ENCODE measurements at regions of chr7 and their contacts with region 1.

Region 1: GRCh38 chr7:156892821-156893706 is at the start of gene LMBR1:
- H3K4me3 Mint-ChIP-seq: peak within 1 kb of the TSS; percentile 90
- H3K27ac Mint-ChIP-seq: peak within 1 kb of the TSS; percentile 96
- H3K4me1 Mint-ChIP-seq: peaks cover 42% of the 10 kb centered on the region
- H3K27me3 Mint-ChIP-seq: no peaks in the 10 kb centered on the region

Region 2: DNA sequence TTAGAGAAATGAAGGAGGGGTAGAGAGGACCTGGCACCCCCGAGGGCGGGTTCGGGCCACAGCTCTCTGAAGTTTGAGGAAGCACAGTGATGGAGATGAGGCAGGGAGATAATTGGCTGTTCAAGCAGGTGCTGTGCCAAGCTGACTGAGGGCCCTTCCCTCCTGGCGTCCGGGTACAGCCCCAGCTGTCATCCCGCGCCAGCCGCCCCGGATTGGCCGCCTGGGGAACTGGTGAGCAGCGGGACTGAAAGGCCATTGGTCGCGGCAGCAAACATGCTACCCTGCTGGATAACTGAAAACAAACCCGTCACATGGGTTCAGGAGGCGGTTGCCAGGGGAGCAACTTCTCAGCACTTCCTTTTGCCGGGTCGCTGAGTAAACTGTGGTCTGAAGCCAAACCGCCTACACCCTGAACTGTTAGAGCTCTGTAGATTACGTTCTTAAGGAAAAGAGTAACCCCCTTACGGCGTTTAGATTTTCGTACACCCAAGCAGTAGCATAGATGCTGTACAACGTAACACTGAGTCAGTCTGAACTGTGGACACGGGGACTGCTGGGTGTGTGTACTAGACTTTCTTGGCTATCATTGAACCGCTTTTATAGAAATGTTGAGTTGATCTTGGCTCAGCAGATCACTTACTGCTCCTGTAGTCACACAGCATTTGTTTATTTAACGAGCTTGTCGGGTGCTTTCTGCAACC is 1594.1 kb before region 1 on chr7:
- intact Hi-C with region 1: loop called (anchors 10 kb)
- H3K4me3 Mint-ChIP-seq: peak overlapping the region; percentile 96
- H3K27ac Mint-ChIP-seq: peak overlapping the region; percentile 92
- H3K4me1 Mint-ChIP-seq: peaks cover 53% of the 10 kb centered on the region
- H3K27me3 Mint-ChIP-seq: no peaks in the 10 kb centered on the region

Region 3: DNA sequence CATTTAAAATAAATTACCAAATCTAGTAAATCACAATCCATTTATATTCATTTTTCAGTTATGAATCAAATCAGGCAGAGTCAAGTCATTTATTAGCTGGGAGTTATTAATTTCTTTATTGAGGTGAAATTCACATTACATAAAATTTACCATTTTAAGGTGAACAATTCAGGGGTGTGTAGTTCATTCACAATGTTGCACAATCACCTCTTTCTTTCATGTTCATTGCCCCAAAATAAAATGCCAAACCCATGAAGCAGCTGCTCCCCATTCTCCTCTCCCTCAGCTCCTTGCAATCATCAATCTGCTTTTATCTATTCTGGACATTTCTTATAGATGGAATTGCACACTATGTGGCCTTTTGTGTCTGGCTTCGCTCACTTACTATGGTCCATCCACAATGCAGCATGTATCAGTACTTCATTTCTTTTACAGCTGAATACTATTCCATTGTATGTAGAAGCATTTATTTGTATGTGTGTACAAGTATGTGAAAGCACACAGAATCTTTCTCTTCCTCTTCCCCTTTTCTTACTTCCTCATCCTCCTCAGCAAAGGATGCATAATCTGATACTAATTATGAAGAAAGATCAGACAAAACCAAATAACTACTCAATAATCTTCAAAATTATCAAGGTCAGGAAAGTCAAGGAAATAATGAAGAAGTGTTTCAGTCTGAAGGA is 60.7 kb before region 1 on chr7:
- intact Hi-C with region 1: loop called (anchors 5 kb)
- H3K4me3 Mint-ChIP-seq: no peak overlapping the region
- H3K27ac Mint-ChIP-seq: peak overlapping the region; percentile 48
- H3K4me1 Mint-ChIP-seq: peaks cover 41% of the 10 kb centered on the region
- H3K27me3 Mint-ChIP-seq: no peaks in the 10 kb centered on the region

Region 4: DNA sequence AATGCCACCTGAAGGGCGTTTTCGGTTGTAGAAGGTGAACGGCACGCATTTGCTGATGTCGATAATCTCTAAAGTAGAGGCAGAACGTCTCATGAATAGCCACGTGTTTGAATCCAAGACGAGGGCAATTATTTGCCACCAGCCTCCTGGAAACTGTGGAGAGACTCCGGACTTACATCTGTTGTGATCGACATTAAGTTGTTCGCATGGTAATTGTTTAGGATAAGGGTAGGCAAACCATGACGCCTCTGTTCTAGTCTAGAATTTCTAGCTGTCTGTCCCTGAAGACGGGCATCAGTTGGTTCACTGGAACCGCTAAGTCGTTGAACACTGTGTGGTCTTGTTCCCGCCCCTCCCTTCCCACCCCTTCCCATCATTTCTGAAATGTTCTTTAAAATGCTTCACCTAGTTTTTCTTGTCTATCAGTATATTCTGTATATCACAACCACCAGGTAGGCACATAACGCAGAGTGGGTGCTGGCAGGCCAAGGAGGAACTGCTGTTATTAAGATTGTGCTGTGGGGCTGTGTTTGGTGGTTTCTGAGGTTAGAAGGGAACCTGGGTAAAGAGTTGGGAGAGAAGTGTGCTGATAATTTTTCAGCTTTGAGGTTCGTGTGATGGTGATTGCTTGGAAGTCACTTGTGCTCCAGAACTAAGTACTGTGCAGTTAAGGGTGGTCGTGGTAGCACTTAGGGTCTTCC is 246.9 kb after region 1 on chr7:
- intact Hi-C with region 1: loop called (anchors 5 kb)
- H3K4me3 Mint-ChIP-seq: peak overlapping the region; percentile 79
- H3K27ac Mint-ChIP-seq: peak overlapping the region; percentile 74
- H3K4me1 Mint-ChIP-seq: peaks cover 58% of the 10 kb centered on the region
- H3K27me3 Mint-ChIP-seq: no peaks in the 10 kb centered on the region

Region 5: GRCh38 chr7:157851501-157852067 is 958.5 kb after region 1 on chr7:
- intact Hi-C with region 1: loop called (anchors 10 kb)
- H3K4me3 Mint-ChIP-seq: peak overlapping the region; percentile 60
- H3K27ac Mint-ChIP-seq: peak overlapping the region; percentile 93
- H3K4me1 Mint-ChIP-seq: peaks cover 47% of the 10 kb centered on the region
- H3K27me3 Mint-ChIP-seq: peaks cover 4% of the 10 kb centered on the region

Measured in dendritic cell treated with granulocyte-macrophage colony-stimulating factor and Interleukin-4, amounts not matched to agents 40 ng/mL and 50 ng/mL, for 4 days (primary cell).